Activated CD4-positive, alpha-beta T cell treated with anti-CD3 and anti-CD28 coated beads, Interleukin-2, amount 10 ng/mL, durations not matched to agents 24 days and 14 days (primary cell): ENCODE measurements at regions of chr1 and their contacts with region 1.

Region 1: DNA sequence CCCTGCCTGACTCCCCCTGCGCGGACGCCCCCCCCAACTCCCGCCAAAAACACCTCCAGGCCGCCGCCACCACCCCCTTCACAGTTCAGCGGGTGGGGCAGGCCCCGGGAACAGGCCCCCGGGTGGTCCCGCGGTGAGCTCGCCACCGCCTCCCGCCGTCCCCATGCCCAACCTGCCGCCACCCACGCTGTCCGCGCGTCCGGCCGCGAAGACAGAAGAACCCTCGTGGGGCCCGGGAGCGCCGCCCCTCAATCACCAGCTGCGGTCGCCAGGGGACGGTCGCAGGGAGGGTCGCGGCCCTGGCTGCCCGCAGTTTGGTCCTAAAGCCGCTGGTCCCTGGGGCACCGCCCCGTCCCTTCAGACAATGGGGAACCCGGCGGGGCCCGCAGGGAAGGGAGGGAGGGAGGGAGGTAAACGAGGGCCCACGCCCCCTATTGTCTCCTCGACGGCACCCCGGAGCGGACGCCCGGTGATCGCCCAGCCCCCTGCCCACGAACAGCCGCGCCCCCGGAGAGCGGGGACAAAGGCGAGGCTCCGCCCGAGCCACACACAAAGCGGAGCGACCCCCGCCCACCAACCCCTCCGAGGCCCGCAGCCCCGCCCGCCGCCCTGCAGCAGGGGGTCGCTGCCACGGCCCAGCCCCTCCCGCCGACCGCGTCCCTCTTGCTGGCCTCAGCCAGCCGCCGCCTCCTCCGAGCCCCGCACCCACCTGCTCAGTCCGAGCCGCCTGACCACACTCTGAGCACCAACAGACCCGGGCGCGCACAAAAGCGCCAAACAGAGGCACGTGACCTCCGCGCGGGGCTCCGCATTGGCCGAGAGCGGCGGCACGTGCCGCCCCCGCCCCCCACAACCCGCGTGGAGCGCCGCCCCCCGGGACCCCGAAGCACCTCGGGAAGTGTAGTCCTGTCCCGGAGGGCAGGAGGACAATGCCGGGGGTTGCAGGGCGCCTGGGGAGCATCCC is at the start of gene STMN1:
- DNase-seq: peak; percentile 95
- H3K4me3 Mint-ChIP-seq: peak within 1 kb of the TSS; percentile 98
- H3K27ac Mint-ChIP-seq: peak within 1 kb of the TSS; percentile 95
- H3K4me1 Mint-ChIP-seq: peaks cover 30% of the 10 kb centered on the region
- H3K27me3 Mint-ChIP-seq: peaks cover 19% of the 10 kb centered on the region
- total RNA-seq, gene STMN1: 247 and 255 TPM in 2 replicates

Region 2: DNA sequence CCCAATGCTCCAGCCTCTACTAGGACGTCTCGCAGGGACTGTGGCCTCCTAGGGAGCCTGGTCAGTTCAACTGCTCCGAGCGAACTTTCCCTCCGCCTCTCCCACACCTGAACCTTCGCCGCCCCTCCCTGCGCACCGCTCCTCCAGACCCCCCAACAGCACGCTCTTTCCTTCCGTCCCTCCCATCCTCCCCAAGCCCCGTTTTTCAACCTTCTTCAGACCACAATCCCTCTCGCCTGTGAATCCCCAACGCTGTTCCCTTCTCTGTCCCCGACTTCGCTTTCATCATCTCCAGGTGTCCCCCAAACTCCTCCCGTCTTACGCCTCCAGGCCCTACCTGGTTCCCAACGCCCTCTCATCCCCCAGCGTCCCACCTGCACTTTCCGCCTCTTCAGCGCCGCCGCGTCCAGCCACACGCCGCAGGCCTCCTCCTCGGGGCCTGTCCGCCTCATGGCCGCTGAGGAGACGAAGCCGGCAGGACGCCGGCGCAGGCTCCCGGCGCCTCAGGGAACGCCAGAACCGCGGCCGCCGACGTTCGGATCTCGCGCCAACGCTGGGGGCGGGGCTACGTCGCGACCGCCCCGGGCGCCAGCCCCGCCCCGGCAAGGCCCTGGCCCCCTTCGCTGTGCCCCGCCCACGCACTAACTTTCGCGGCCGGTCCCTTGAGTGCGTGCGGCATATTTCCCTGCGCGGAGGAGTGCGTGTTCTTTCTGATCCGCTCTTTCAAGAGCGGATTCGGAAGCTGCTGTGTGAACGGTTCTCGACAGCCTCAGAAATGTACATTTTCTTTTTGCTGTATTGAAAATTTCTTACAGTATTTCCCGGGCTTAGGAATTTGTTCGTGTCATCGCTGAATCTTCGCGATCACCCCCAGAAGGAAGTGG is 46.8 kb before region 1 on chr1 and contains the start of gene AUNIP:
- intact Hi-C with region 1: loop called (anchors 1 kb)
- DNase-seq: peak; percentile 98
- H3K4me3 Mint-ChIP-seq: peak within 1 kb of the TSS; percentile 97
- H3K27ac Mint-ChIP-seq: peak within 1 kb of the TSS; percentile 96
- H3K4me1 Mint-ChIP-seq: peaks cover 27% of the 10 kb centered on the region
- H3K27me3 Mint-ChIP-seq: no peaks in the 10 kb centered on the region
- total RNA-seq, gene AUNIP: 12.0 and 13.9 TPM in 2 replicates

Region 3: GRCh38 chr1:25895365-25895993 is 10.5 kb before region 1 on chr1:
- intact Hi-C with region 1: loop called (anchors 1 kb)
- DNase-seq: peak; percentile 97
- H3K4me3 Mint-ChIP-seq: no peak overlapping the region
- H3K27ac Mint-ChIP-seq: peak overlapping the region; percentile 64
- H3K4me1 Mint-ChIP-seq: peaks cover 24% of the 10 kb centered on the region
- H3K27me3 Mint-ChIP-seq: no peaks in the 10 kb centered on the region

Region 4: GRCh38 chr1:25922056-25922969 is 16.4 kb after region 1 on chr1:
- intact Hi-C with region 1: loop called (anchors 2 kb)
- DNase-seq: peak; percentile 86
- H3K4me3 Mint-ChIP-seq: peak overlapping the region; percentile 82
- H3K27ac Mint-ChIP-seq: no peak overlapping the region
- H3K4me1 Mint-ChIP-seq: peaks cover 26% of the 10 kb centered on the region
- H3K27me3 Mint-ChIP-seq: peaks cover 40% of the 10 kb centered on the region

Region 5: DNA sequence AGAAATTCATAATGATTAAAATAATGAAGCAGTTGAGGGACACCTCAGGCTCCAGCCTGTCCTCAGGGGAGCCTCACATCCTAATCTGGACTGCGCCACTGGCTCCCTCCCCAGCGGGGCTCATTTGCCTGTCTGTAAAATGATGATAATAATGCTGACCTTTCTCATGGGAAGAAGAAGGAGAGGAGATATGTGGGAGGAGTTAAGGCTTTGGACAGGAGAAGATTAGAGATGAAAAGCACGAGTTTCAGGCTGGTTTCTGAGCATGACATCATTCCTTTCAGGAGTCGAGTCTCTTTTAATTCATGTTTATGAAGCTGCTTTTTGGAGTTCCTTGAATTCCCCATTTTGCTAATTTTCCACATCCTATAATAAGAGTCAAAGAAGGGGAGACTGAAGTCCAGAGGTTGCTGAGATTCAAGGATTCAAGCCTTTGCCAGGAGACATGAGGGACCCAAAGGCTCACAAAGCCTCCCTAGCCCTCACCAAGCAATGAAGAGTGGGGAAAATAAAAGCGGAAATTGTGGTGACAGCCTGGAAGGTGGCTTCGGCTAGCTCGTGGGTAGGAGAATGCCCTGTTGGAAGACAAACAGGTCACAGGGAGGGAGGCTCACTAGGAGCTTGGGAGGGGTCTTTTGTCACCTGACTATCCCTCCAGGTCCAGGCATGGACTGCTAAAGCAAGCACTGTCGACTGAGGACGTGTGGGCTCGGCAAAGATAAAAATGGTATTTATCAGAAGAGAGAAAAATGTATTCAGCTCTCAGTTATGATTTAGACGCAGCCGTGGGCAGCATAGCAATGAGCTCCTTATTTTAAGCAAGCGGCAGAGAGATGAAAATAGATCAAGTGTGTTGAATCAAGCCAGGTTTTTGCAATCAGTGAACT is 27.8 kb after region 1 on chr1:
- intact Hi-C with region 1: no loop called
- DNase-seq: no peak
- H3K4me3 Mint-ChIP-seq: no peak overlapping the region
- H3K27ac Mint-ChIP-seq: no peak overlapping the region
- H3K4me1 Mint-ChIP-seq: peaks cover 5% of the 10 kb centered on the region
- H3K27me3 Mint-ChIP-seq: peaks cover 28% of the 10 kb centered on the region

Region 6: GRCh38 chr1:25997828-25998761 is 92.1 kb after region 1 on chr1 and contains the start of gene PAFAH2:
- intact Hi-C with region 1: loop called (anchors 1 kb)
- DNase-seq: peak; percentile 99
- H3K4me3 Mint-ChIP-seq: peak within 1 kb of the TSS; percentile 92
- H3K27ac Mint-ChIP-seq: peak within 1 kb of the TSS; percentile 96
- H3K4me1 Mint-ChIP-seq: peaks cover 22% of the 10 kb centered on the region
- H3K27me3 Mint-ChIP-seq: peaks cover 2% of the 10 kb centered on the region
- total RNA-seq, gene PAFAH2: 6.8 and 7.6 TPM in 2 replicates

Region 7: DNA sequence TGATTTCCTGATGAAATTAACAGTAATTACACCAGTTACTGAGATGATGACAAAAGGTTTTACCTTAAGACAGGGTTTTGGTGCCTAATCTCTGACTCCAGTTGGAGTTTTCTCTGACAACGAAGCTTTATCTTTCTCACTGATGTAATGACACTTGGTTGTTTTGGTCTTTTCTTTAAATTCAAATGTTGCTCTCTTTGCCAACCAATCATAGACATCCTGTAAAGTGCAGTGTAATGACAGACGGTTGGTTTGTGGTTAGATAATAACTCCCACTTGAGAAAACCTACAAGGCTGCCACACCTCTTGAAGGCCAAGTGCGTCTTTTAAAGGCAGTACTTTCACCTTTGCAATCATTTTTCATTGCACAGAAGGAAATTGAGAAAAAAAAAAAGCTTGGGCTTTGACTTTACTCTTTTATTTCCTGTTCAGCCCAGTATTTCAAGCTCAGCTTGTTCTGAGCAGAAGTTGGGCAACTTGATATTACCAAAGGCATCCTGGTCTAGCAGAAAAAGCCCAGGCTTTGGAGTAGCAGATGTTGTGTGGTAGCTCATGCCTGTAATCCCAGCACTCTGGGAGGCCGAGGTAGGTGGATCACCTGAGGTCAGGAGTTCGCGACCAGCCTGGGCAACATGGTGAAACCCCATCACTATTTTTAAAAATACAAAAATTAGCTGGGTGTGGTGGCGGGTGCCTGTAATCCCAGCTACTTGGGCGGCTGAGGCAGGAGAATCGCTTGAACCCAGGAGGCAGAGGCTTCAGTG is 220.5 kb after region 1 on chr1:
- intact Hi-C with region 1: loop called (anchors 10 kb)
- DNase-seq: peak; percentile 91
- H3K4me3 Mint-ChIP-seq: peak overlapping the region; percentile 73
- H3K27ac Mint-ChIP-seq: peak overlapping the region; percentile 89
- H3K4me1 Mint-ChIP-seq: peaks cover 50% of the 10 kb centered on the region
- H3K27me3 Mint-ChIP-seq: no peaks in the 10 kb centered on the region

Region 8: GRCh38 chr1:26306290-26307229 is 400.6 kb after region 1 on chr1 and contains the start of gene UBXN11:
- intact Hi-C with region 1: loop called (anchors 1 kb)
- DNase-seq: peak; percentile 98
- H3K4me3 Mint-ChIP-seq: peak within 1 kb of the TSS; percentile 98
- H3K27ac Mint-ChIP-seq: peak within 1 kb of the TSS; percentile 93
- H3K4me1 Mint-ChIP-seq: peaks cover 30% of the 10 kb centered on the region
- H3K27me3 Mint-ChIP-seq: no peaks in the 10 kb centered on the region
- total RNA-seq, gene UBXN11: 17.1 and 19.0 TPM in 2 replicates